ENCODE measurements at regions of chr3 and their contacts with region 1.

Region 1: DNA sequence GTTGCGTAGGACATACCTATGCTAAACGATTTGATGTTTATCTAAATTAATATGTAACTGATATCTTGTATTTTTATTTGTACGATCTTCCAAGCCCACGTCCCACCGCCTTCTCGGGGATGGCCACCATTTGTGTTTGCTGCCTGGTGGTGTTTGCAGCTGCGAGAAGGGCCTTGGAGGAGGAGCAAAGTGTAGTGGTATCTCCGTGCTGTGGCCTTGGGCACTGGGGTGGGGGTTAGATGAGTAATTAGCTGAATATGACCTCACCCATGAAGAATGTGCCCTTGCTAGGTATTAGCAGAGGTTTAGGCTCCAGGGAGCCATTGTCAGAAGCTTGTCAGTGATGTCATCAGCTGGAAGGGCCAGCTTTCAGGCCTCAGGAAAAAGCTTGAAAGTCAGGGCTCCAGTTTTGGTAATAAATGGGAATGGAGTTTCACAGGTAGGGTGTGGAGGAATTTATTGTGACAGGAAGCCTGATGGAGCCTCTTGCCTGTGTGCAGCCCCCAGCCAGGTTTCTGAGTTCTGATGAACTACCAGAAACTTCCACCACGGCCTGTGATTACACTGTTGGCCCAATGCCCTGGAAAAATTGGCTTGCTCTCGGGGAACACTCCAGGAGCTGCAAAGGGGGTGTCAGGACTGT is 41.0 kb downstream of the FLNB start:
- DNase-seq: no peak
- H3K4me3 ChIP-seq: no peak overlapping the region
- H3K27me3 ChIP-seq: no peaks in the 10 kb centered on the region
- CTCF ChIP-seq: no peak

Region 2: GRCh38 chr3:57903124-57903890 is 146.0 kb before region 1 on chr3:
- CTCF ChIA-PET with region 1: no interaction called
- POLR2A ChIA-PET with region 1: no interaction called
- DNase-seq: no peak
- H3K4me3 ChIP-seq: no peak overlapping the region
- H3K27me3 ChIP-seq: no peaks in the 10 kb centered on the region
- CTCF ChIP-seq: no peak

Region 3: GRCh38 chr3:57942388-57942787 is 106.9 kb before region 1 on chr3:
- CTCF ChIA-PET with region 1: no interaction called
- POLR2A ChIA-PET with region 1: interaction called, 18 read pairs
- DNase-seq: no peak
- H3K4me3 ChIP-seq: no peak overlapping the region
- H3K27me3 ChIP-seq: no peaks in the 10 kb centered on the region
- CTCF ChIP-seq: no peak

Region 4: DNA sequence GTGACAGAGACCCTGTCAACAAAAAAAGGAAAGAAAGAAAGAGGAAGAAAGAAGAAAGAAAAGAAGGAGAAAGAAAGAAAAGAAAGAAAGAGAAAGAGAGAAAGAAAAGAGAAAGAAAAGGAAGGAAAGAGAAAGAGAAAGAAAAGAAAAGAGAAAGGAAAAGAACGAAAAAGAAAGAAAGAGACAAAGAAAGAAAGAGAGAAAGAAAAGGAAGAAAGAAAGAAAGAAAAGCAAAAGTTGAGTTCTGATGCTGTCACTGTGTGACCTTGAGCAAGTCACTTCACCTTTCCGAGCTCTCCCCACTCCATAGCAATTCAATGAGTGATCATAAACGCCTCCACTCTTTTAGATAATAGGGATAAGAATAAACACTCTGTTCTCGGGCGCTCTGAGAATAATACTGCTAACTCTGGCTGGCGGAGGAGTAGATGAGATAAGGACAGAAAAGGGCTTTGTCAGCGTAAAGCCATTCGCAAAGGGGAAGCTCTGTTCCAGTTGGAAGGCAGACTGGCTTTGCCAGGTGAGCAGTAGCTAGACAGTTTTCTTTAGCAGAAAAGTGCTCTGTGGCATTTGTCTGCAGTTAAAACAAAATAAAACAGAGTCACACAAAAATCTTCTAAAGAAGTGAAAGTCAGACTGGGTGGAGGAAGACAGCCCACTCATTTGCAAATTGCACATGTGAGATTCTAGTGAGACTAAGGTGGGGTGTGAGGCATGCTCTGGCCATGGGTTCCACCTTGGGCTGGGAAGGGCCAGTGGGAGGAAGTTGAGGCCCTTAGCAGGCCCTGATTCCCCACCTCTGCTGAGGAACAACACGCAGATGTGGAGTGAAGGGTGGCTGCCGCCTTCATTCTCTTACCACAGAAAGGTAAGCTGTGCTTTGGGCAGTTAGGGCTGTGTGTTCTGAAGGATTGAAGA is 50.6 kb before region 1 on chr3:
- CTCF ChIA-PET with region 1: no interaction called
- POLR2A ChIA-PET with region 1: no interaction called
- DNase-seq: no peak
- H3K4me3 ChIP-seq: no peak overlapping the region
- H3K27me3 ChIP-seq: no peaks in the 10 kb centered on the region
- CTCF ChIP-seq: no peak

Region 5: GRCh38 chr3:58129041-58129770 is 79.9 kb after region 1 on chr3:
- CTCF ChIA-PET with region 1: no interaction called
- POLR2A ChIA-PET with region 1: no interaction called
- DNase-seq: no peak
- H3K4me3 ChIP-seq: no peak overlapping the region
- H3K27me3 ChIP-seq: no peaks in the 10 kb centered on the region
- CTCF ChIP-seq: no peak